ENCODE measurements at regions of chr4 and their contacts with region 1.

Region 1: DNA sequence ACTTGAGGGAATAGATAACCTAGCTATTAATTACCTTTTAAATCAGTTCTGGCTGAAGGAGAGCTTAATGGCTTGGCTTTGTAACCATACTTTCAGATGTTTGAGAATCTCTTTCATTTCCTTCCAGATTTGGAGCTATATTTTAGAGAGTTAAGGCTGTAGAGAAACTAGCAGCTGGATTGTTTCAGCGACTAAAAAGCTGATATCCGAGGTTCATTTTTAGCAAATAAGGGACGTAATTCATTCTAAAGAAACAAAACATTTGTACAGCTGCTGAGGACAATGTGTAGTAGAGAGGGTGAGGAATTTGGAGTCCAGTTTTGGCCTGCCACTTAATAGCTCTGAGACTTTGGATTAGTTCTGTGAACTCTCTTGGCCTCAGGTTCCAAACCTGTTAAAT is 12.2 kb downstream of the OSTC start:
- DNase-seq: no peak
- H3K4me3 Mint-ChIP-seq: no peak overlapping the region
- H3K27ac Mint-ChIP-seq: no peak overlapping the region
- H3K4me1 Mint-ChIP-seq: no peaks in the 10 kb centered on the region
- H3K27me3 Mint-ChIP-seq: no peaks in the 10 kb centered on the region

Region 2: GRCh38 chr4:108650212-108651013 is 12.2 kb before region 1 on chr4 and contains the start of gene OSTC:
- CTCF ChIA-PET with region 1: interaction called, 11 read pairs
- POLR2A ChIA-PET with region 1: no interaction called
- DNase-seq: peak; percentile 92
- H3K4me3 Mint-ChIP-seq: peak within 1 kb of the TSS; percentile 84
- H3K27ac Mint-ChIP-seq: peak within 1 kb of the TSS; percentile 88
- H3K4me1 Mint-ChIP-seq: peaks cover 33% of the 10 kb centered on the region
- H3K27me3 Mint-ChIP-seq: no peaks in the 10 kb centered on the region
- total RNA-seq, gene OSTC: 70.2 to 77.6 TPM

Region 3: GRCh38 chr4:108683479-108683878 is 20.9 kb after region 1 on chr4:
- CTCF ChIA-PET with region 1: no interaction called
- POLR2A ChIA-PET with region 1: no interaction called
- DNase-seq: no peak
- H3K4me3 Mint-ChIP-seq: no peak overlapping the region
- H3K27ac Mint-ChIP-seq: no peak overlapping the region
- H3K4me1 Mint-ChIP-seq: no peaks in the 10 kb centered on the region
- H3K27me3 Mint-ChIP-seq: peaks cover 2% of the 10 kb centered on the region

Region 4: DNA sequence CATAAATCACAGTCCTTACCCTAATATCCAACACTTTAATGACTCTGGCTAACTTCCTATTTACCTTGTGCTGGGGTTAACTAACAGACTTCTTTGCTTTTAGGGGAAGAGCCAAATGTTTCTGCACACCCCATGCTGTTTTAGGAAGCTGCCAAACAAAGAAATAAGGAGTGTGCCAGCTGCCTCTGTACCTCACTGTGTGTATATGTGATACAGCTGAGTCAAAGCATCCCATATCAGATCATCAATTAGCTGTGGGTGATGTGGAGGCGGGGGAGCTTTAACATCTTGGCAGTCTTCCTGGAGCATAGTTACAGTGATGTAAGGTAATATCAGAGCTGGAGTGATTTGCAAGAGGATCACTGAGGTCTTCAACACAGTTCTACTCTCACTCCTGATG is 544.4 kb after region 1 on chr4:
- CTCF ChIA-PET with region 1: no interaction called
- POLR2A ChIA-PET with region 1: no interaction called
- DNase-seq: no peak
- H3K4me3 Mint-ChIP-seq: no peak overlapping the region
- H3K27ac Mint-ChIP-seq: no peak overlapping the region
- H3K4me1 Mint-ChIP-seq: no peaks in the 10 kb centered on the region
- H3K27me3 Mint-ChIP-seq: peaks cover 19% of the 10 kb centered on the region

Measured in activated CD4-positive, alpha-beta T cell treated with anti-CD3 and anti-CD28 coated beads, Interleukin-2, amount 10 ng/mL, durations not matched to agents 7 days and 5 days (primary cell).